Tibial artery (tissue), 4 donors: ENCODE measurements at regions of chr17 and their contacts with region 1.

Region 1: GRCh38 chr17:11178581-11178980 is 62.4 kb upstream of the SHISA6 start:
- DNase-seq: no peak
- H3K4me3 ChIP-seq: no peak overlapping the region
- H3K27ac ChIP-seq: no peak overlapping the region
- H3K4me1 ChIP-seq: no peaks in the 10 kb centered on the region
- H3K27me3 ChIP-seq: no peaks in the 10 kb centered on the region
- CTCF ChIP-seq: no peak

Region 2: DNA sequence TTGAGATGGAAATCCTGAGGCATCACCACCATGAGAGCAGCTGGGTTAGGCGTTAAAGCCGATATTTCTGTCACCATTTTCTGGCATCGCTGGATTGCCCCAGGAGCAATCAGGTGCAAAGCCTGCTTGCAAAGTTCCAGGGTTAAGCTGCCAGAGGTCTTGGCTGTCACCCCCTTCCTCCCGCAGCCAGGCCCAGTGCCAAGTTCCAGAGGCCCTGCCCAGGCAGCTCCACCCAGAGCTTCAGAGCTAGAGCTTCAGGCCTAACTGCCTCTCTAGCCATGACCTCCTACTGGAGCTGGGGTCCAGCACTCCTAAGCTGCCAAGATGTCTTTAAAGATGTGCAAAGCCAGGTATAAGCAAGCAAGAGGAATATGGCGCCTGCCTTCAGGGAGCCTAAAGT is 365.9 kb before region 1 on chr17:
- intact Hi-C with region 1: loop called (anchors 10 kb)
- DNase-seq: no peak
- H3K4me3 ChIP-seq: no peak overlapping the region
- H3K27ac ChIP-seq: no peak overlapping the region
- H3K4me1 ChIP-seq: peaks cover 0 to 4% (median 0%) of the 10 kb centered on the region in 4 donors
- H3K27me3 ChIP-seq: no peaks in the 10 kb centered on the region
- CTCF ChIP-seq: no peak

Region 3: GRCh38 chr17:10992106-10992880 is 186.3 kb before region 1 on chr17:
- intact Hi-C with region 1: no loop called
- DNase-seq: no peak
- H3K4me3 ChIP-seq: no peak overlapping the region
- H3K27ac ChIP-seq: no peak overlapping the region
- H3K4me1 ChIP-seq: no peaks in the 10 kb centered on the region
- H3K27me3 ChIP-seq: no peaks in the 10 kb centered on the region
- CTCF ChIP-seq: no peak